Endothelial cell of umbilical vein (primary cell): ENCODE measurements at regions of chr16 and their contacts with region 1.

Region 1: DNA sequence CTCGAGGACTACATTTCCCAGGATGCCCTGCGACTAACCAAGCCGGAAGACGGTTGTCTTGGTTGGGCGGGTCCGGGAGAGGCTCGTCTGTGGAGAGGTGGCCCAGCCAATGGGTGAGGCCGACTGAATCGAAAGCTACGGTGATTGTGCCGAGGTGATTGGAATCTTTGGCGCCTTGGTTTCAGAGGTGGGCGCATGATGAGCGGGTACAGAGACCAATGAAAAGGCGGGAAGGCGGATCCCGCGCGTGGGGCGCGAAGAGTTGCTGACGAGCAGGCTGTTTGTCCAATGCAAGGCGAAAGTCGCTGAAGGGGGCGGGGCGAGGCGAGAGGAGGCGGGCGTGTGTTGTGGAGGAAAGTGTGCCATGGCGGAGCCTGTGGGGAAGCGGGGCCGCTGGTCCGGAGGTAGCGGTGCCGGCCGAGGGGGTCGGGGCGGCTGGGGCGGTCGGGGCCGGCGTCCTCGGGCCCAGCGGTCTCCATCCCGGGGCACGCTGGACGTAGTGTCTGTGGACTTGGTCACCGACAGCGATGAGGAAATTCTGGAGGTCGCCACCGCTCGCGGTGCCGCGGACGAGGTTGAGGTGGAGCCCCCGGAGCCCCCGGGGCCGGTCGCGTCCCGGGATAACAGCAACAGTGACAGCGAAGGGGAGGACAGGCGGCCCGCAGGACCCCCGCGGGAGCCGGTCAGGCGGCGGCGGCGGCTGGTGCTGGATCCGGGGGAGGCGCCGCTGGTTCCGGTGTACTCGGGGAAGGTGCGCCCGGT is at the start of gene NFATC2IP:
- DNase-seq: peak; percentile 100
- H3K4me3 ChIP-seq: peak within 1 kb of the TSS; percentile 79 to 90 (median 89)
- H3K27ac ChIP-seq: peak within 1 kb of the TSS; percentile 48
- H3K4me1 ChIP-seq: peaks cover 11% of the 10 kb centered on the region
- H3K27me3 ChIP-seq: no peaks in the 10 kb centered on the region
- CTCF ChIP-seq: no peak
- POLR2A ChIP-seq: no peak
- total RNA-seq, gene NFATC2IP: 64.8 and 69.6 TPM in 2 replicates

Region 2: GRCh38 chr16:28473714-28474265 is 477.0 kb before region 1 on chr16:
- CTCF ChIA-PET with region 1: no interaction called
- POLR2A ChIA-PET with region 1: interaction called, 14 read pairs
- dilution Hi-C with region 1: no loop called
- intact Hi-C with region 1: no loop called
- DNase-seq: no peak
- H3K4me3 ChIP-seq: no peak overlapping the region
- H3K27ac ChIP-seq: no peak overlapping the region
- H3K4me1 ChIP-seq: no peaks in the 10 kb centered on the region
- H3K27me3 ChIP-seq: no peaks in the 10 kb centered on the region
- CTCF ChIP-seq: no peak
- POLR2A ChIP-seq: no peak

Region 3: GRCh38 chr16:28846080-28846932 is 104.5 kb before region 1 on chr16 and contains the start of gene TUFM:
- CTCF ChIA-PET with region 1: interaction called, 20 read pairs
- POLR2A ChIA-PET with region 1: no interaction called
- dilution Hi-C with region 1: no loop called
- intact Hi-C with region 1: loop called (anchors 1 kb)
- DNase-seq: peak; percentile 99
- H3K4me3 ChIP-seq: peak within 1 kb of the TSS; percentile 54 to 84 (median 67)
- H3K27ac ChIP-seq: peak within 1 kb of the TSS; percentile 42
- H3K4me1 ChIP-seq: peaks cover 13% of the 10 kb centered on the region
- H3K27me3 ChIP-seq: no peaks in the 10 kb centered on the region
- CTCF ChIP-seq: peak; percentile 70 to 83
- POLR2A ChIP-seq: peak; percentile 87
- total RNA-seq, gene TUFM: 186 and 190 TPM in 2 replicates

Region 4: GRCh38 chr16:28863929-28864793 is 86.7 kb before region 1 on chr16:
- CTCF ChIA-PET with region 1: interaction called, 15 read pairs
- POLR2A ChIA-PET with region 1: no interaction called
- dilution Hi-C with region 1: no loop called
- intact Hi-C with region 1: no loop called
- DNase-seq: peak; percentile 52
- H3K4me3 ChIP-seq: peak overlapping the region; percentile 46 to 90 (median 83)
- H3K27ac ChIP-seq: peak overlapping the region; percentile 96
- H3K4me1 ChIP-seq: peaks cover 8% of the 10 kb centered on the region
- H3K27me3 ChIP-seq: no peaks in the 10 kb centered on the region
- CTCF ChIP-seq: no peak
- POLR2A ChIP-seq: no peak

Region 5: GRCh38 chr16:28935924-28936783 is 14.7 kb before region 1 on chr16:
- CTCF ChIA-PET with region 1: interaction called, 18 read pairs
- POLR2A ChIA-PET with region 1: no interaction called
- dilution Hi-C with region 1: no loop called
- intact Hi-C with region 1: loop called (anchors 2 kb)
- DNase-seq: peak; percentile 85
- H3K4me3 ChIP-seq: peak overlapping the region in 1 of 3 experiments; percentile 12
- H3K27ac ChIP-seq: no peak overlapping the region
- H3K4me1 ChIP-seq: no peaks in the 10 kb centered on the region
- H3K27me3 ChIP-seq: no peaks in the 10 kb centered on the region
- CTCF ChIP-seq: no peak
- POLR2A ChIP-seq: no peak

Region 6: DNA sequence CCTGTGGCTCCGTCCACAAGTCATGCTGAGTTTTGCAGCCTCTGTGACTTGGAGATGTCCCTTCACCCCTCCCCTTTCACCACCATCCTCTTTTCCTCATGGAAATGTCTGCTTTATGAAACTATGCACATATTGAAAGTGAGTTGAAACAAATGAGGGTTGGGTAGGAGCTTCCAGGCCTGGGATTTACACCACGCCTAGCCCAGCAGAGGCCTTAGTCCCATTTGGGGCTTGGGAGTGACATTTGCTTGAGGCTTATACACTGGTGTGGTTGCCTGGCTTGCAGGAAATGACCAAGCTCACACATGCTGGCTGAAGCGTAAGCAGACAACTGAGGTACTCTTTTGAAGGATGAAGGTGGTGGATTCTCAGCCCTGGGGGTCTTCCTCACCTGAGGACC is 13.2 kb after region 1 on chr16:
- CTCF ChIA-PET with region 1: no interaction called
- POLR2A ChIA-PET with region 1: no interaction called
- dilution Hi-C with region 1: no loop called
- intact Hi-C with region 1: no loop called
- DNase-seq: no peak
- H3K4me3 ChIP-seq: no peak overlapping the region
- H3K27ac ChIP-seq: no peak overlapping the region
- H3K4me1 ChIP-seq: no peaks in the 10 kb centered on the region
- H3K27me3 ChIP-seq: no peaks in the 10 kb centered on the region
- CTCF ChIP-seq: no peak
- POLR2A ChIP-seq: no peak

Region 7: GRCh38 chr16:28974437-28975157 is 23.8 kb after region 1 on chr16 and contains the start of gene SPNS1:
- CTCF ChIA-PET with region 1: interaction called, 4 read pairs
- POLR2A ChIA-PET with region 1: no interaction called
- dilution Hi-C with region 1: no loop called
- intact Hi-C with region 1: loop called (anchors 2 kb)
- DNase-seq: peak; percentile 96
- H3K4me3 ChIP-seq: peak within 1 kb of the TSS; percentile 68 to 100 (median 84)
- H3K27ac ChIP-seq: peak within 1 kb of the TSS; percentile 91
- H3K4me1 ChIP-seq: peaks cover 7% of the 10 kb centered on the region
- H3K27me3 ChIP-seq: no peaks in the 10 kb centered on the region
- CTCF ChIP-seq: no peak
- POLR2A ChIP-seq: peak; percentile 89
- total RNA-seq, gene SPNS1: 63.7 and 65.2 TPM in 2 replicates

Region 8: DNA sequence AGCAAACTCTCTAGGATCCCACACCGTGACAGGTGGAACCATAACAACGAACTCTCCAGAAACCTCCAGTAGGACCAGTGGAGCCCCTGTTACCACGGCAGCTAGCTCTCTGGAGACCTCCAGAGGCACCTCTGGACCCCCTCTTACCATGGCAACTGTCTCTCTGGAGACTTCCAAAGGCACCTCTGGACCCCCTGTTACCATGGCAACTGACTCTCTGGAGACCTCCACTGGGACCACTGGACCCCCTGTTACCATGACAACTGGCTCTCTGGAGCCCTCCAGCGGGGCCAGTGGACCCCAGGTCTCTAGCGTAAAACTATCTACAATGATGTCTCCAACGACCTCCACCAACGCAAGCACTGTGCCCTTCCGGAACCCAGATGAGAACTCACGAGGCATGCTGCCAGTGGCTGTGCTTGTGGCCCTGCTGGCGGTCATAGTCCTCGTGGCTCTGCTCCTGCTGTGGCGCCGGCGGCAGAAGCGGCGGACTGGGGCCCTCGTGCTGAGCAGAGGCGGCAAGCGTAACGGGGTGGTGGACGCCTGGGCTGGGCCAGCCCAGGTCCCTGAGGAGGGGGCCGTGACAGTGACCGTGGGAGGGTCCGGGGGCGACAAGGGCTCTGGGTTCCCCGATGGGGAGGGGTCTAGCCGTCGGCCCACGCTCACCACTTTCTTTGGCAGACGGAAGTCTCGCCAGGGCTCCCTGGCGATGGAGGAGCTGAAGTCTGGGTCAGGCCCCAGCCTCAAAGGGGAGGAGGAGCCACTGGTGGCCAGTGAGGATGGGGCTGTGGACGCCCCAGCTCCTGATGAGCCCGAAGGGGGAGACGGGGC is 713.5 kb after region 1 on chr16:
- CTCF ChIA-PET with region 1: no interaction called
- POLR2A ChIA-PET with region 1: no interaction called
- dilution Hi-C with region 1: no loop called
- intact Hi-C with region 1: no loop called
- DNase-seq: no peak
- H3K4me3 ChIP-seq: no peak overlapping the region
- H3K27ac ChIP-seq: no peak overlapping the region
- H3K4me1 ChIP-seq: no peaks in the 10 kb centered on the region
- H3K27me3 ChIP-seq: no peaks in the 10 kb centered on the region
- CTCF ChIP-seq: no peak
- POLR2A ChIP-seq: no peak